ENCODE measurements at regions of chr11 and their contacts with region 1.

Region 1: DNA sequence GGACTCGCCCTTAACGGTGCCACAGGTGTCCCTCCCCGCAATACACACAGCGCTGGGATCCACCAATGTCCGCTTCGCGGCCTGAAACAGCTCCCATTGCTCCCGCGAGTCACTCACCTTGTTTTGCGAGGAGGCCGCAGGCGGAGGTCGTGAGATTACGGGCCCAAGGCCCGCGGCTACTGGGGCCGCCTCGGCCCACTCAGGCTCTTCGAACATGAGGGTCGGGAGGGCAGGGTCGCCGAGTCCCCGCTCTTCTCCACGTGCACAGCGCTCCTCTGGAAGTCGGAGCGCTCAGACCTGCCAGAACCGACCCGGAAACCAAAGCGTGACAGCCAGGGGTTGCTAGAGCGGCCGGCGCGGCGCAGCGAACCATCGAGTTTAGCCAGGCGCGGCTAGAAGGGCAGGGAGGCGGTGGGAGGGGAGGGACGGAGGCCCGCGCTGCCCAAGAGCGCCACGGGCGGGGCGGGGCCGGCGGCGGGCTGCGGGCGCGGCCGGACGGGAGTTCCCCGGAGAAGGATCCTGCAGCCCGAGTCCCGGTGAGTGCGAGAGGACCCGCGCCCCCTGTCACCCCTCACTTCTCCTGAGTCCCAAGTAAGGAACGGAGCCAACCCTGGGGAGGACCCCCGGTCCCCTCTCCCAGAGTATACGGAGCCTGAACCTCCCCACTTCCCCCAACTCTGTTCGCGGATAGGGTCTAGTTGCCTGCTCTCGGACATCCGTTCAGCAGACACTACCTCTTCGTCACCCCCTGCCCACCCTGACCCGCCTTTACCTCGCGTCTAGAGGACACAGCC is at the starts of genes ILK and RRP8:
- DNase-seq: peak; percentile 90
- H3K4me3 ChIP-seq: peak within 1 kb of the TSS; percentile 64 to 88 (median 76)
- H3K27ac ChIP-seq: peak within 1 kb of the TSS; percentile 69
- H3K4me1 ChIP-seq: peaks cover 33% of the 10 kb centered on the region
- H3K27me3 ChIP-seq: no peaks in the 10 kb centered on the region
- CTCF ChIP-seq: peak in 1 of 2 donors; percentile 35
- total RNA-seq, gene ILK: 87.9 to 136 TPM
- total RNA-seq, gene RRP8: 9.7 to 20.6 TPM

Region 2: GRCh38 chr11:6473481-6474422 is 129.7 kb before region 1 on chr11 and contains the start of gene TRIM3:
- CTCF ChIA-PET with region 1: no interaction called
- dilution Hi-C with region 1: loop called (anchors 5 kb)
- in situ Hi-C with region 1: no loop called
- intact Hi-C with region 1: loop called (anchors 5 kb)
- DNase-seq: peak; percentile 82
- H3K4me3 ChIP-seq: peak within 1 kb of the TSS; percentile 62 to 80 (median 70)
- H3K27ac ChIP-seq: peak within 1 kb of the TSS; percentile 66
- H3K4me1 ChIP-seq: peaks cover 17% of the 10 kb centered on the region
- H3K27me3 ChIP-seq: no peaks in the 10 kb centered on the region
- CTCF ChIP-seq: peak in 1 of 2 donors; percentile 49
- total RNA-seq, gene TRIM3: 9.3 to 20.8 TPM

Region 3: GRCh38 chr11:6619004-6619745 is 15.7 kb after region 1 on chr11 and contains the start of gene TPP1:
- CTCF ChIA-PET with region 1: no interaction called
- dilution Hi-C with region 1: no loop called
- in situ Hi-C with region 1: no loop called
- intact Hi-C with region 1: loop called (anchors 1 kb)
- DNase-seq: peak; percentile 94
- H3K4me3 ChIP-seq: peak within 1 kb of the TSS; percentile 49 to 82 (median 65)
- H3K27ac ChIP-seq: peak within 1 kb of the TSS; percentile 78
- H3K4me1 ChIP-seq: peaks cover 25% of the 10 kb centered on the region
- H3K27me3 ChIP-seq: no peaks in the 10 kb centered on the region
- CTCF ChIP-seq: no peak
- total RNA-seq, gene TPP1: 59.2 to 73.9 TPM

Region 4: DNA sequence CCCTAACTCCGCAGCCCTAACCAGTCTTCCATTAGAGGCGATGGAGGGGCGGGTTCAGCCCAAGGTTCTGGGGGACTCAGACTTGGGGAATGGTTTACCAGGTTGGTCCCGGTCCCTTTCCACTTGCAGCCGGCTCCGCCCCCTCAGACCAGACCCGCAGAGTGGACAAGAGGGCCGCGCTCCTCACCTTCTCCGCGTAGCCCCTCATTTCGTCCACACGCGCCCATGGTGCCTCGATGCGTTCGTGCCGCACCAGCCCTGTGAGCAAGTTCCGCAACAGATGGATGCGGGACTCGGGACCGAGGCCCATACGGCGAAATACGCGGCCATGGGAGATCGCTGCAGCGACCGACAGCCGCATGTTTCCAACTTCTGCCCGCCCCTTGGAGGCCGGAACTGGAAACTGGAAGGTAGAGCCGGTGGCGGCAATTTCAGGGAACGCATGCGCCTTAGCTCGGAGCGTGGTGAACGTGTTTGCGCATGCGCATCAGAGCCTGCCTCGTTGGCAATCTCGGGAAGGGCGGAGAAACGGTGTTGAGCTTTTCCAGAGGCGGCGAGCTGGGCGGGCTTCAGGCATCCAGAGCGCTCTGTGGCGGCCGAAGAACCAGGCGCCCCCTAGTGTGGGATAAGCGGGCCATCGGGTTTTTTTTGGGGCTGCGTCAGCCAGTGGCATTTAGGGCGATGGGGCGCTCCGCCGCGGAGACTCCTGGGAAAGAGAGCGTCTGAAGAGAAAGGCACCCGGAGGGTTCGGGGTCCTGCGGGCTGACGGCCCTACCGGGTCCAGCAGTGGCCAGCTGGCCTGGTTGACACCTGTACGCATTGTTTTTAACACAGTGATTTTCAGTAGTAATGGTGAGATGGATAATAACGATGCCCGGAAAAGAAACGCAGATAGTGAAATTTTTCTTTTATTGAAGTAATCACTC is 79.7 kb after region 1 on chr11 and contains the start of gene MRPL17:
- CTCF ChIA-PET with region 1: interaction called, 6 read pairs
- dilution Hi-C with region 1: no loop called
- in situ Hi-C with region 1: loop called in 1 of 2 experiments (anchors 5 kb)
- intact Hi-C with region 1: loop called (anchors 1 kb)
- DNase-seq: peak; percentile 98
- H3K4me3 ChIP-seq: peak within 1 kb of the TSS; percentile 72 to 98 (median 90)
- H3K27ac ChIP-seq: peak within 1 kb of the TSS; percentile 66
- H3K4me1 ChIP-seq: peaks cover 5% of the 10 kb centered on the region
- H3K27me3 ChIP-seq: no peaks in the 10 kb centered on the region
- CTCF ChIP-seq: peak; percentile 67 to 84
- total RNA-seq, gene MRPL17: 23.8 to 95.9 TPM